BJ (cell line): ENCODE measurements at regions of chr2 and their contacts with region 1.

Region 1: GRCh38 chr2:63023444-63023843 is 27.2 kb upstream of the OTX1 start:
- DNase-seq: no peak
- H3K4me3 ChIP-seq: no peak overlapping the region
- H3K27me3 ChIP-seq: no peaks in the 10 kb centered on the region
- CTCF ChIP-seq: peak; percentile 27

Region 2: DNA sequence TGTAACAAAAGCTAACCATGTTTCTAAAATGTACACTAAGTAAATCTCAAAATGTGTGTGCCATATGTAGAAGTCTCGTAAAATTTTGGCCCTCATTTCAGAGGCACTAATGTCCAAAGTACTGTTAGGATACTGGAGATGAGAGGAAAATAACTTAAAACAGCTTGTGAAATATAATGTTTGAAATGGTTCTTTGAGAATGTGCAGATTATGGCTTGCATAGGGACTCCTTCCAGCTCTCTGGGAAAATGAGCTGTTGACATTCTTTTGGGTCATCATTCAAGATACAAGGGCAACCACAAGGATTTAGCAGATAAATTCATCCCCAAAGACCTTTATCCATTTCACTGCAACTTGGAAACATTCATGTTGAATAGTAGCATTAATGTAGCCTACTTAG is 10.9 kb before region 1 on chr2:
- CTCF ChIA-PET with region 1: interaction called, 4 read pairs
- POLR2A ChIA-PET with region 1: interaction called, 15 read pairs
- DNase-seq: peak; percentile 35
- H3K4me3 ChIP-seq: no peak overlapping the region
- H3K27me3 ChIP-seq: no peaks in the 10 kb centered on the region
- CTCF ChIP-seq: no peak